Aorta (tissue), 5 donors: ENCODE measurements at regions of chr7 and their contacts with region 1.

Region 1: GRCh38 chr7:1144269-1144771 is 15.7 kb downstream of the ZFAND2A start:
- DNase-seq: peak; percentile 72 to 79
- ATAC-seq: peak; percentile 68
- H3K4me3 ChIP-seq: no peak overlapping the region
- H3K27ac ChIP-seq: no peak overlapping the region
- H3K4me1 ChIP-seq: no peaks in the 10 kb centered on the region
- H3K27me3 ChIP-seq: no peaks in the 10 kb centered on the region

Region 2: GRCh38 chr7:974820-975681 is 169.3 kb before region 1 on chr7 and contains the start of gene COX19:
- intact Hi-C with region 1: loop called in 1 of 2 experiments (anchors 5 kb)
- DNase-seq: peak; percentile 95 to 97
- ATAC-seq: peak; percentile 98
- H3K4me3 ChIP-seq: peak within 1 kb of the TSS; percentile 65 to 98
- H3K27ac ChIP-seq: peak within 1 kb of the TSS; percentile 78 to 81
- H3K4me1 ChIP-seq: no peaks in the 10 kb centered on the region
- H3K27me3 ChIP-seq: no peaks in the 10 kb centered on the region
- total RNA-seq, gene COX19: 10.8 to 17.0 TPM

Region 3: DNA sequence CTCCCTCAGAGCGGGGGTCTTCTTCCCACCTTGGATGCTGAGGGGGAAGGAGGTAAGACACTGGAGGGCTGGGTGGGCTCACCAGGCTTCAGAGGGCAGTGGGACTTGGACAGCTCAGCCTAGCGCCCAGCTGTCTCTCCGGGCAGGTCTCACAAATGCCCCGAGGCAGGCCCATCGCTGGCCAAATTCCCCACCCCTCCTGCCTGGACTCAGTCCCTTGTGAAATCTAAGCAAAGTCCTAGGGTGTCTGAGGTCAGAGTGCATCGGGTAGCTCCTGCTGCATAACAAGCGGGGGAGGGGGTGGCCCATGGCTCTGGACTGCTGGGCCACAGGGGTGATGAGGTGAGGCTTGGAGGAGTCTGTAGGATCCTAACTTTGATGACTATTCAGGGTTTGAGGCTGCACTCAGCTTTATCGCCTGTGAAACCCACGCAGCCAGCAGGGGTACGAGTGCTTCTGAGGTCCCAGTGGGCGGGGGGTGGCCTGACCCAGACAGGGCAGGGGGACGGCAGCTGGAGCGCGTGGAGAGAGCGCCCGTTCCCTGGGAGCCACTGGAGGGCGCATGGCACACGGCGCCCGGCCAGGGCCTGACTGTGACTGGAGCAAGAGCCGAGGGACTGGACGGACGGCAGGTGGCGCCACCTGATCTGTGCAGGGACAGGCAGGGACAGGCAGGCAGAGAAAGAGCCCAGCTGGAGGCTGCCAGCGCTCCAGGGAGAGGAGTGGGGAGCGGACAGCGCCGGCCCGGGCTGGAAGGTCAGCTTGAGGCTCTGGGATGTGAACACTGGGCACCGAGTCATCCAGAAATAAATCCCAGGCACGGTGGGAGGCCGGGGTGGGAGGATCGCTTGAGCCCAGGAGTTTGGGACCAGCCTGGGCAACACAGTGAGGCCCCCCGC is 151.4 kb before region 1 on chr7:
- intact Hi-C with region 1: loop called (anchors 5 kb)
- DNase-seq: peak; percentile 99 to 100
- ATAC-seq: peak; percentile 96
- H3K4me3 ChIP-seq: no peak overlapping the region
- H3K27ac ChIP-seq: no peak overlapping the region
- H3K4me1 ChIP-seq: no peaks in the 10 kb centered on the region
- H3K27me3 ChIP-seq: no peaks in the 10 kb centered on the region